CD4-positive, alpha-beta T cell (primary cell): ENCODE measurements at regions of chr5 and their contacts with region 1.

Region 1: DNA sequence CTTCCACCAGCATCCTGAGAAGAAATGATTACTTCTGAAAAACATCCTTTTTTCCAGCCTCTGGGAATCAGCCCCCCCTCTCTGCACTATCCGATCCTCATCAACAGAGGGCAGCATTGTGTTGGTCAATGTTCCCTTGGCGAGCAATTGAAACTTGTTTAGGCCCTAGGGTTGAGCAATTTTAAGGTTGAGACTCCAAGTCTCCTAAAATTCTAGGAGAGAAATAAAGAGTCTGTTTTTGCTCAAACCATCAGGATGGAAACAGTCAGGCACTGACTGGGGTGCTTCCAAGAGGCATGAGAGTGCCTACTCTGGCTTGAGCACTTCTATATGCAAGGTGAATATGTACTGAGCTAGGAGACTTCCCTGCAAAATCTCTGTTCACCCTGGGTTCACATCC is 12.4 kb upstream of the CYFIP2 start:
- DNase-seq: peak in 2 of 14 experiments; percentile 30 to 66
- ATAC-seq: no peak
- H3K4me3 ChIP-seq: no peak overlapping the region
- H3K4me3 Mint-ChIP-seq: peak overlapping the region; percentile 74
- H3K27ac ChIP-seq: peak overlapping the region; percentile 46 to 73
- H3K27ac Mint-ChIP-seq: peak overlapping the region; percentile 91
- H3K4me1 ChIP-seq: peaks cover 76% of the 10 kb centered on the region
- H3K4me1 Mint-ChIP-seq: peaks cover 97% of the 10 kb centered on the region
- H3K27me3 ChIP-seq: no peaks in the 10 kb centered on the region
- H3K27me3 Mint-ChIP-seq: no peaks in the 10 kb centered on the region
- CTCF ChIP-seq: peak; percentile 73

Region 2: DNA sequence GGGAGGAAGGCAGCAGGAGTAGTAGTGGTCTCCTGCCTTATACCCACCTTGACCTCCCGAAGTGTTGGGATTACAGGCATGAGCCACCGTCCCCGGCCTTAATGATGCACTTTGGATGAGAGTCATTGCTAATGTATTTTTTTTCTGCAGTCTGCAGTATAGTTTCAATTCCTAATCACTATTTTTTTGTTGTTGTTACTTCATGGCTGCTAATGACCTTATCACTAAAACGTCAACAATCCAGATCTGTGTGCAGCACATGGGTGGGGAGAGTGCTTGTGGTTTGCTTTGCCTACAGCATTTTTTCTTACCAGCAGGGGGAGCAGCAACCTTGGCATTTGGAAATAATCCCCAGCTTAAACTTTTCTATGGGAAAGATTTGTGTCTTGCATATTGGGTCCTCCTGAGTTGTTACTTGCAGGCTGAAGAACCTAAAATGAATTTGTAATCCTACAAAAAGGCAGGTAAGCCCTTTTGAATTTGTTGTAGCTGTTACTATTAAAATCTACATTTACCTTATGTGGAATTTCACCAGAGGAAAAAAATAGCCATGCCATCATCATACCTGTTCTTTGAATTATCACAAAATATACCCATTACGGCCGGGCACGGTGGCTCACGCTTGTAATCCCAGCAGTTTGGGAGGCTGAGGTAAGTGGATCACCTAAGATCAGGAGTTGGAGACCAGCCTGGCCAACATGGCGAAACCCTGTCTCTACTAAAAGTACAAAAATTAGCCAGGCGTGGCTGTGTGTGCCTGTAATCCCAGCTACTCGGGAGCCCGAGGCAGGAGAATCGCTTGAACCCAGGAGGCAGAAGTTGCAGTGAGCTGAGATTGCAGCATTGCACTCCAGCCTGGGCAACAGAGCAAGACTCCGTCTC is 104.6 kb before region 1 on chr5:
- CTCF ChIA-PET with region 1: interaction called, 13 read pairs
- POLR2A ChIA-PET with region 1: interaction called, 25 read pairs
- intact Hi-C with region 1: loop called (anchors 5 kb)
- DNase-seq: peak; percentile 66 to 92 (median 77)
- ATAC-seq: peak; percentile 86
- H3K4me3 ChIP-seq: no peak overlapping the region
- H3K4me3 Mint-ChIP-seq: peak overlapping the region; percentile 28
- H3K27ac ChIP-seq: no peak overlapping the region
- H3K27ac Mint-ChIP-seq: peak overlapping the region; percentile 53
- H3K4me1 ChIP-seq: peaks cover 35% of the 10 kb centered on the region
- H3K4me1 Mint-ChIP-seq: peaks cover 46% of the 10 kb centered on the region
- H3K27me3 ChIP-seq: no peaks in the 10 kb centered on the region
- H3K27me3 Mint-ChIP-seq: no peaks in the 10 kb centered on the region
- CTCF ChIP-seq: peak; percentile 82

Region 3: DNA sequence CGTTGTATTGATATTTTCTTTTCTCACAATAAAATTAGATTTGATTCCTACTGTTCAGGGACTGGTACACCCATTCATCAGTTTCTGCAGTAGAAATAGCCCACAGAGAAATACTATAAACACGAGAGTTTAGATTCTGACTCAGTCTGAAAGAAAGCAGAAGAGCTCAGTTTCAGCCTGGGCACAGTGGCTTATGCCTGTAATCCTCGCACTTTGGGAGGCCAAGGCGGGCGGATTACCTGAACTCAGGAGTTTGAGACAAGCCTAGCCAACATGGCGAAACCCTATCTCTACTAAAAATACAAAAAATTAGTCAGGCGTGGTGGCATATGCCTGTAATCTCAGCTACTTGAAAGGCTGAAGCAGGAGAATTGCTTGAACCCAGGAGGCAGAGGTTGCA is 64.3 kb before region 1 on chr5:
- CTCF ChIA-PET with region 1: interaction called, 3 read pairs
- POLR2A ChIA-PET with region 1: interaction called, 30 read pairs
- intact Hi-C with region 1: loop called in 1 of 2 experiments (anchors 5 kb)
- DNase-seq: peak in 1 of 14 experiments; percentile 42
- ATAC-seq: no peak
- H3K4me3 ChIP-seq: peak overlapping the region; percentile 85
- H3K4me3 Mint-ChIP-seq: peak overlapping the region; percentile 92
- H3K27ac ChIP-seq: peak overlapping the region; percentile 38 to 67
- H3K27ac Mint-ChIP-seq: peak overlapping the region; percentile 96
- H3K4me1 ChIP-seq: peaks cover 72% of the 10 kb centered on the region
- H3K4me1 Mint-ChIP-seq: peaks cover 92% of the 10 kb centered on the region
- H3K27me3 ChIP-seq: no peaks in the 10 kb centered on the region
- H3K27me3 Mint-ChIP-seq: no peaks in the 10 kb centered on the region
- CTCF ChIP-seq: no peak

Region 4: GRCh38 chr5:157219491-157220271 is 33.9 kb before region 1 on chr5:
- CTCF ChIA-PET with region 1: no interaction called
- POLR2A ChIA-PET with region 1: interaction called, 10 read pairs
- intact Hi-C with region 1: loop called in 1 of 2 experiments (anchors 1 kb)
- DNase-seq: no peak
- ATAC-seq: no peak
- H3K4me3 ChIP-seq: no peak overlapping the region
- H3K4me3 Mint-ChIP-seq: peak overlapping the region; percentile 27
- H3K27ac ChIP-seq: peak overlapping the region; percentile 70 to 72
- H3K27ac Mint-ChIP-seq: peak overlapping the region; percentile 80
- H3K4me1 ChIP-seq: peaks cover 99% of the 10 kb centered on the region
- H3K4me1 Mint-ChIP-seq: peaks cover 85% of the 10 kb centered on the region
- H3K27me3 ChIP-seq: no peaks in the 10 kb centered on the region
- H3K27me3 Mint-ChIP-seq: no peaks in the 10 kb centered on the region
- CTCF ChIP-seq: no peak

Region 5: DNA sequence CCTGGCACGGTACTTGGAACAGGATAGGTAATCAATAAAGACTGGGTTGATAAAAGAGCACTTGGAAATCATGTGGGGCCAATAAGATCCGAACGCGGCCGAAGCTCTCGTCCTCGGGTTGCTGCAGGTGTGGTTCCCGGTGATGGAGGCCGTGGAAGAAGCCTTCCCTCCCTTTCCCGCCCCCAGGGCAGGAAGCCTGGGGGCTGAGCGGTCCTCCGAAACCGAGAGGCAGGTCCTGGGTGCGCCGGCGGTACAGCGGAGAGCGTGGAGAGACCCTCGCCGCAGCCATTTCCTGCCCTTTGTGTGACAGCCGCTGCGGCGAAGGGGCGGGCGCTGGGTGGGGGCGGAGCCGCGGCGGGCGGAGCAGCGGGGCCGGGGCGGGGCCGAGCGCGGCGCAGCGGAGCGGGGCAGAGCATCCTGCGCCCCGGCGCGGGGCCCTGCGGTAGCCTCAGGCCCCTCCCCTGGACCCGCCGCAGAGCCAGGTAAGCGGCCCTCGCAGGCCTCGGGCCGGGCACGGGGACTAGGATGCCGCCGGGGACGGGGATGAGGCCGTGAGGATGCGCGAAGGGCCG is 12.3 kb after region 1 on chr5 and contains the start of gene CYFIP2:
- CTCF ChIA-PET with region 1: interaction called, 7 read pairs
- POLR2A ChIA-PET with region 1: interaction called, 123 read pairs
- intact Hi-C with region 1: loop called in 1 of 2 experiments (anchors 2 kb)
- DNase-seq: peak; percentile 75 to 94 (median 84)
- ATAC-seq: peak; percentile 84
- H3K4me3 ChIP-seq: peak within 1 kb of the TSS; percentile 79
- H3K4me3 Mint-ChIP-seq: peak within 1 kb of the TSS; percentile 99
- H3K27ac ChIP-seq: peak within 1 kb of the TSS; percentile 77 to 94
- H3K27ac Mint-ChIP-seq: peak within 1 kb of the TSS; percentile 97
- H3K4me1 ChIP-seq: peaks cover 63% of the 10 kb centered on the region
- H3K4me1 Mint-ChIP-seq: peaks cover 81% of the 10 kb centered on the region
- H3K27me3 ChIP-seq: no peaks in the 10 kb centered on the region
- H3K27me3 Mint-ChIP-seq: no peaks in the 10 kb centered on the region
- CTCF ChIP-seq: no peak
- total RNA-seq, gene CYFIP2: 271 to 287 TPM

Region 6: GRCh38 chr5:157303667-157304327 is 50.2 kb after region 1 on chr5:
- CTCF ChIA-PET with region 1: interaction called, 8 read pairs
- POLR2A ChIA-PET with region 1: interaction called, 30 read pairs
- intact Hi-C with region 1: no loop called
- DNase-seq: peak; percentile 45 to 86 (median 56)
- ATAC-seq: peak; percentile 72
- H3K4me3 ChIP-seq: peak overlapping the region; percentile 42
- H3K4me3 Mint-ChIP-seq: peak overlapping the region; percentile 87
- H3K27ac ChIP-seq: peak overlapping the region; percentile 54 to 65
- H3K27ac Mint-ChIP-seq: peak overlapping the region; percentile 80
- H3K4me1 ChIP-seq: peaks cover 57% of the 10 kb centered on the region
- H3K4me1 Mint-ChIP-seq: peaks cover 70% of the 10 kb centered on the region
- H3K27me3 ChIP-seq: no peaks in the 10 kb centered on the region
- H3K27me3 Mint-ChIP-seq: no peaks in the 10 kb centered on the region
- CTCF ChIP-seq: peak; percentile 26

Region 7: DNA sequence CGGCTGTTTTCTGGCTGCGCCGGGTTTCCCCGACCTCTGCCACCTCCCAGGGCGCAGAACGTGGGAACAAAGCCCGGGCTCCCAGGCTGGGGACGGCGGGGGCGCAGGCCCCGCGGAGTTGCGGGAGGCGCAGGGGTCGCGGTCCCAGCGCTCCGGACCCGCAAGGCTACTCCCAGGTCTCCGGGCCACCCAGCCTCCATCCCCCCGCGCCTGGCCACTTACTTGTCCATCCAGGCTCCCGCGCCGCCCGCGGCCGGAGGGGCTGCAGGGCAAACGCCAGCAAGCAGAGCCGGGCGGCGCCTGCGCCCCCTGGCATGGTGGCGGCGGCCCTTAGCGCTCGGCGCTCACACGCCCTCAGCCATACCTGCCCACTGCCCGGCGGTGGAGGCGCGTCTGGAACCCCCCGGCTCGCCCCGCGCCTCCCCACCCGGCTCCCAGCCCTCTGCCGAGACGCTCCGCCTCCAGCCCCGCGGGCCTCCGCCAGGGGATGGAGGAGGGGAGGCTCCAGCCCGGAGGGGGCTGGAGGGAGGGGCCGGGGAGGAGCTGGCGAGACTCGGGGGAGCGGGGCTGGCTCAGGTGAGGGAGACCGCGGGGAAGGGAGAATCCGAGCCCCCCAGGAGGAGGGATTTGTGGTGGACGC is 322.0 kb after region 1 on chr5 and contains the start of gene ADAM19:
- CTCF ChIA-PET with region 1: no interaction called
- POLR2A ChIA-PET with region 1: no interaction called
- intact Hi-C with region 1: no loop called
- DNase-seq: peak in 9 of 14 experiments; percentile 22 to 79 (median 54)
- ATAC-seq: peak; percentile 70
- H3K4me3 ChIP-seq: peak within 1 kb of the TSS; percentile 98
- H3K4me3 Mint-ChIP-seq: peak within 1 kb of the TSS; percentile 89
- H3K27ac ChIP-seq: peak within 1 kb of the TSS; percentile 37 to 64
- H3K27ac Mint-ChIP-seq: peak within 1 kb of the TSS; percentile 76
- H3K4me1 ChIP-seq: peaks cover 47% of the 10 kb centered on the region
- H3K4me1 Mint-ChIP-seq: peaks cover 49% of the 10 kb centered on the region
- H3K27me3 ChIP-seq: peaks cover 0 to 3% of the 10 kb centered on the region in 2 experiments
- H3K27me3 Mint-ChIP-seq: no peaks in the 10 kb centered on the region
- CTCF ChIP-seq: no peak
- total RNA-seq, gene ADAM19: 26.7 to 29.1 TPM